ENCODE measurements at regions of chr2 and their contacts with region 1.

Region 1: DNA sequence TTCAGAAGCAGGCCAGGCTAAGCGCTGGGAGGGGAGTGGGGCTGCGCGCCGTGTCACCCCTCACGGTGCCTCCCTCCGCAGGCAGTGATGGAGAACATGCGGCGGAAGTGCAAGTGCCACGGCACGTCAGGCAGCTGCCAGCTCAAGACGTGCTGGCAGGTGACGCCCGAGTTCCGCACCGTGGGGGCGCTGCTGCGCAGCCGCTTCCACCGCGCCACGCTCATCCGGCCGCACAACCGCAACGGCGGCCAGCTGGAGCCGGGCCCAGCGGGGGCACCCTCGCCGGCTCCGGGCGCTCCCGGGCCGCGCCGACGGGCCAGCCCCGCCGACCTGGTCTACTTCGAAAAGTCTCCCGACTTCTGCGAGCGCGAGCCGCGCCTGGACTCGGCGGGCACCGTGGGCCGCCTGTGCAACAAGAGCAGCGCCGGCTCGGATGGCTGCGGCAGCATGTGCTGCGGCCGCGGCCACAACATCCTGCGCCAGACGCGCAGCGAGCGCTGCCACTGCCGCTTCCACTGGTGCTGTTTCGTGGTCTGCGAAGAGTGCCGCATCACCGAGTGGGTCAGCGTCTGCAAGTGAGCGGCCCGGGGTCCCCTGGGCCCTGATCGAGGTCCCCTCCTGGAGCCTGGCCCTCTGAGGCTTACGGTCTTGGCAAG is 12.2 kb downstream of the WNT10A start:
- DNase-seq: peak; percentile 93
- ATAC-seq: peak; percentile 64
- H3K4me3 Mint-ChIP-seq: peak overlapping the region; percentile 71
- H3K27ac Mint-ChIP-seq: peak overlapping the region; percentile 91
- H3K4me1 Mint-ChIP-seq: peaks cover 49% of the 10 kb centered on the region
- H3K27me3 Mint-ChIP-seq: no peaks in the 10 kb centered on the region

Region 2: DNA sequence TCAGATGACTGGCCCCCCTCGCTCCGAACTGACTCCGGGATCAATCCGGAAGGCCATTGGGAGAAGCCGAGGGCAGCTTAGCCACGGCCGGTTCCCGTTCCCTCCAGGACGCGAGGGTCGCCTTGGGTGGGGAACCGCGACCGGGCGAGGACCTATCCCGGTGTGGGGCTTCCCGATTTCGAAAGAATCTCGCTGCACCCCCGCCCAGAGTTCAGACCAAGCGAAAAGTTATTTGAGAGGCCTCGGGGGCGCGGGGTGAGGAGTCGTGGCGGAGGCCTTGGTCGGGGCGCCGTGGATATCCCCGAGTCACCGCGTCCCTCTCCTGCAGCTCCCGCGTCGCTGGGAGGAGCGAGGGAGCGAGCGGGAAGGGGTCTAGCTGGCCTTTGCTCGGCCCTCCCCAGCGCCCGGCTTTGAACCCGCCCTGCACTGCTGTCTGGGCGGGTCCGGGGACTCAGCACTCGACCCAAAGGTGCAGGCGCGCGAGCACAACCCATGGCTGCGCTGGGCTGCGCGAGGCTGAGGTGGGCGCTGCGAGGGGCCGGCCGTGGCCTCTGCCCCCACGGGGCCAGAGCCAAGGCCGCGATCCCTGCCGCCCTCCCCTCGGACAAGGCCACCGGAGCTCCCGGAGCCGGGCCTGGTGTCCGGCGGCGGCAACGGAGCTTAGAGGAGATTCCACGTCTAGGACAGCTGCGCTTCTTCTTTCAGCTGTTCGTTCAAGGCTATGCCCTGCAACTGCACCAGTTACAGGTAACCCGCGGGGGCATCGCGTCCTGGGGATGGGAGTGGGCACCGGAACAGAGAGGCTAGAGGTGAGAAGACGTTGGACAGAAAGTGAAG is 110.9 kb before region 1 on chr2 and contains the start of gene CYP27A1:
- CTCF ChIA-PET with region 1: no interaction called
- POLR2A ChIA-PET with region 1: no interaction called
- intact Hi-C with region 1: no loop called
- DNase-seq: peak; percentile 10
- ATAC-seq: peak; percentile 30
- H3K4me3 Mint-ChIP-seq: no peak within 1 kb of the TSS
- H3K27ac Mint-ChIP-seq: no peak within 1 kb of the TSS
- H3K4me1 Mint-ChIP-seq: no peaks in the 10 kb centered on the region
- H3K27me3 Mint-ChIP-seq: peaks cover 35% of the 10 kb centered on the region
- total RNA-seq, gene CYP27A1: 0.12 to 0.16 TPM

Region 3: GRCh38 chr2:218876562-218877219 is 16.1 kb before region 1 on chr2:
- CTCF ChIA-PET with region 1: interaction called, 620 read pairs
- POLR2A ChIA-PET with region 1: interaction called, 15 read pairs
- intact Hi-C with region 1: loop called (anchors 1 kb)
- DNase-seq: peak; percentile 83
- ATAC-seq: no peak
- H3K4me3 Mint-ChIP-seq: no peak overlapping the region
- H3K27ac Mint-ChIP-seq: no peak overlapping the region
- H3K4me1 Mint-ChIP-seq: peaks cover 43% of the 10 kb centered on the region
- H3K27me3 Mint-ChIP-seq: peaks cover 39% of the 10 kb centered on the region